ENCODE measurements at regions of chr6 and their contacts with region 1.

Region 1: GRCh38 chr6:167881327-167881726 is 54.6 kb downstream of the AFDN start:
- DNase-seq: no peak
- ATAC-seq: no peak
- H3K4me3 ChIP-seq: no peak overlapping the region
- H3K27ac ChIP-seq: no peak overlapping the region
- H3K4me1 ChIP-seq: peaks cover 0 to 16% (median 1%) of the 10 kb centered on the region in 12 donors
- H3K27me3 ChIP-seq: no peaks in the 10 kb centered on the region
- CTCF ChIP-seq: no peak
- POLR2A ChIP-seq: no peak

Region 2: GRCh38 chr6:167832497-167833395 is 48.6 kb before region 1 on chr6:
- intact Hi-C with region 1: loop called in 2 of 10 experiments (anchors 5 to 10 kb)
- DNase-seq: no peak
- ATAC-seq: peak in 2 of 4 donors; percentile 41 to 45
- H3K4me3 ChIP-seq: peak overlapping the region in 1 of 12 donors; percentile 23
- H3K27ac ChIP-seq: peak overlapping the region in 1 of 12 donors; percentile 65
- H3K4me1 ChIP-seq: peaks cover 0 to 71% (median 37%) of the 10 kb centered on the region in 12 donors
- H3K27me3 ChIP-seq: peaks cover 0 to 16% (median 0%) of the 10 kb centered on the region in 9 donors
- CTCF ChIP-seq: no peak
- POLR2A ChIP-seq: no peak

Region 3: DNA sequence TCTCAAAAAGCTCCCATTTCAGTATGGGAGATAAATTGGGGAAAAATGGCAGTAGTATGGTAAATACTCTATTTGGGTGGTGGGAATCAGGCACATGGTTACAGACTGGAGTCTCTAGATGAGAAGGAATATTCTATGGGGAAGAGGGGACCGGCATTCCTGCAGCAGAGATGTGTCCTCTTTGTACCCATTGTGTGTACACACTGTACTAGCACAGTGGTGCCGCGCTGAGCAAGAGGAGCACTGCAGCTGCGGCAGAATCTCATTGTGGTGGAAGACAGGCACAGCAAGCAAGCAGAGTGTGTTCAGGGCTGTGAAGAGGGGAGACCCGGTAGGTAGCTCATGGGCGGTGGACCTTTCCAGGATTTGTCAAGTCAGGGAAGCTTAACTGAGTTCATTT is 41.6 kb before region 1 on chr6:
- intact Hi-C with region 1: loop called in 2 of 10 experiments (anchors 5 to 10 kb)
- DNase-seq: no peak
- ATAC-seq: peak in 1 of 4 donors; percentile 18
- H3K4me3 ChIP-seq: no peak overlapping the region
- H3K27ac ChIP-seq: no peak overlapping the region
- H3K4me1 ChIP-seq: peaks cover 0 to 62% (median 15%) of the 10 kb centered on the region in 12 donors
- H3K27me3 ChIP-seq: no peaks in the 10 kb centered on the region
- CTCF ChIP-seq: no peak
- POLR2A ChIP-seq: no peak

Region 4: DNA sequence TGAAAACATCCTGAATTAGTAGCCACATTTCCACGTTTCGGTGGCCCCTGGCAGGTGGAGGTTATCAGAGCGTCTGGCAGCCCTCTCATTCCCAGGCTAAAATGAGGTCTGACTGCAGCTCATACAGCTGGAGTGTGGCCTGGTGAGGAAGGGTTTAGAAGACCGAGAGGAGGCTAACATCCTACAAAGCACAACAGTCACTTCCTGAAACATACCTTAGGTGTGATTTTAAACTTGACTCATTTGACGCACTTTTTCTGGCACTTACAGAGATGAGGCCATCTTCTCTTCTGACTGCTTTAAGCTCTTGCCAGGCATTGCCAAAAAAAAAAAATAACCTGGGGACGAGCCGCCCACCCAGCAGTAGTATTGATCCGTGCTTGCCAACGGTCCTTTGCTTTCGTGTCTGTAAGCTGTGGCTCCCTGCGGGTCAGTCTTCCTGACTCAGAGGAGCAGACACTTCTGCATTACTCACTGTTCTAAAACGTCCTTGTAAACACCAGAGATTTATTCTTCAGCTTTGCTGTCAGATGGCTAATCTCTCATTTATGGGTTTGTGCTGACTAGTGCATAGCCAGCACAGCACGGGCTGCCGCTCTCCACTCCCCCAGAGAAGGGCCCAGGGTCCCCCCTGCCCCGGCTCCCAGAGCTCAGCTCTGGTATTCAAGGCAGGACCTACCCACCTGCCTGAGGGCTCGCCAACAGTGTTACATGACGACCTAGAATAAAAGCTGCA is 276.1 kb after region 1 on chr6:
- intact Hi-C with region 1: no loop called
- DNase-seq: peak in 1 of 5 donors; percentile 12
- ATAC-seq: peak in 1 of 4 donors; percentile 71
- H3K4me3 ChIP-seq: peak overlapping the region in 1 of 12 donors; percentile 32
- H3K27ac ChIP-seq: peak overlapping the region in 2 of 12 donors; percentile 29 to 69
- H3K4me1 ChIP-seq: peaks cover 0 to 7% (median 0%) of the 10 kb centered on the region in 12 donors
- H3K27me3 ChIP-seq: peaks cover 0 to 38% (median 4%) of the 10 kb centered on the region in 9 donors
- CTCF ChIP-seq: no peak
- POLR2A ChIP-seq: no peak

Region 5: GRCh38 chr6:169689247-169689646 is 1807.9 kb after region 1 on chr6:
- intact Hi-C with region 1: no loop called
- DNase-seq: no peak
- ATAC-seq: no peak
- H3K4me3 ChIP-seq: no peak overlapping the region
- H3K27ac ChIP-seq: no peak overlapping the region
- H3K4me1 ChIP-seq: no peaks in the 10 kb centered on the region
- H3K27me3 ChIP-seq: no peaks in the 10 kb centered on the region
- CTCF ChIP-seq: no peak
- POLR2A ChIP-seq: no peak

Measured in heart left ventricle (tissue), 16 donors.